CD8-positive, alpha-beta memory T cell (primary cell): ENCODE measurements at regions of chr1 and their contacts with region 1.

Region 1: DNA sequence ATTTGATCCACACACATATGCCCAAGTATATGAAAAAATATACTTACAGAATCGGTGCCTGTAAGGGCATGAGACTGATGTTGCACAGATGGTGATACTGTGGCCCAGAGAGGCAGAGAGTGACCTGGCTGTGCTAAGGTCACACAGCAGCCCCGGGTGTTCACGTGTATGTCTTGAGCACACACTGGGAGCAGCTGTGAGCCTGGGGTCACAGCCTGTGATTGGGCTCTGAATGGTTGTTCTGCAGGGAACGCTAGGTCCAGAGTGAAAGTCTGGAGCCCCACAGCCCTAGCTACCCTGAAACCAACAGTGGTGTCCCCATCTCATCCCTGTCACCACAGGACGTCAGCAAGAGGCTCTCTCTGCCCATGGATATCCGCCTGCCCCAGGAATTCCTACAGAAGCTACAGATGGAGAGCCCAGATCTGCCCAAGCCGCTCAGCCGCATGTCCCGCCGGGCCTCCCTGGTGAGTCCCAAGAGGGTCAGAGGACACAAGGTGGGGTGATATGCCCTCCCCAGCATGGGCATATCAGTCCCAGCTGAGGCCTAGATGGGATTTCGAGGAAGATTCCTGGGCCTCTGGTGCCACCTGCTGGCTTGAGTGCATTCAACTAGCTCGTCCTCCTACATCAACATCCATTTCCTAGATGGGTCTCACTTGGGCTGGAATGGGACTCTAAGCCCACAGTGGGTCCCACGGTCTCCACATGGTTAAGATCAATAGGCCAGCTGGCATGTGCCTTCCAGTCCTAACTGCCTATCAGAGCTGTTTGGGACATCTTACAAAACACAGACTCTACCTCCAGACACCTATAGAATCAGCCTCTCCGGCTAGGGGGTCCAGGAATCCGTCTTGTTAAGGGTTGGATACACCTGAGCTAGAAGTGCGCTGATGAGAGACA is 19.7 kb downstream of the CDK18 start:
- DNase-seq: peak; percentile 58 to 80 (median 62)
- H3K4me3 ChIP-seq: no peak overlapping the region
- H3K4me3 Mint-ChIP-seq: no peak overlapping the region
- H3K27ac ChIP-seq: no peak overlapping the region
- H3K27ac Mint-ChIP-seq: no peak overlapping the region
- H3K4me1 ChIP-seq: no peaks in the 10 kb centered on the region
- H3K4me1 Mint-ChIP-seq: peaks cover 0 to 2% (median 0%) of the 10 kb centered on the region in 3 donors
- H3K27me3 ChIP-seq: no peaks in the 10 kb centered on the region
- H3K27me3 Mint-ChIP-seq: peaks cover 3 to 5% of the 10 kb centered on the region in 2 donors

Region 2: DNA sequence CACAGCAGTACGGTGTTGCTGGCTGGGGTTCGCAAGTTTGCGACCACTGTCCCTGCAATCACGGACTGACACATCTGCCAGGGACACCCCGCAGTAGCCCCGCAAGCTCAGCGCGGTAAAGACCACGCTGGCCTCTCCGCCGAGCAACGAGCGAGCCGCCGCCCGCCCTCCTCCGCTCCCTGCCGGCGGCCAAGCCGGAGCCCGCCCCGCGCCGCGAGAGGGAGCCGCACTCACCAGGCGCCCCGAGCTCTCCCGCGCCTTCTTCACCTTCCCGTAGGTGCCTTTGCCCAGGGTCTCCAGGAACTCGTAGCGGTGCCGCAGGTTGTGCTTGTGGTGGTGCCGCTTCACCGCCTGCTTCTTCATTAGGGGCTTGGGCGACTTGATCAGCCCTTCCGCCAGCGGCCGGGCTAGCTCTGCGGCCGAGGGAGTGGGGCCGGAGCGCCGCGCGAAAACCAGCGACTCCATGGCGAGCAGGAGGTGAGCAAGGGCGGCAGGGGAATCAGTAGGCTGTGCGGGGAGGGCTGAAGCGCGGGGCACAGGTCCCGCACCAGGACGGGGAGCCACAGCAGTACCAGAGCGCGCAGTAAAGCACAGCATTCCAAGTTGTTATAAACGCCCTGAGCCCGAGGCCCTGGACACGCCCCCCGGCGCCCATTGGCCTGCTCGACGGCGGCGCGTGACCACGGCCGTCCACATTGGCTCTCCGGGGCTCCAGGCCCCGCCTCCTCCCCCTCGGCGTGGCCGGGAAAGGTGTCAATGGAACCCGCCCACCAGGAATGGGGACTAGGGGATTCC is 202.8 kb before region 1 on chr1 and contains the start of gene NUAK2:
- CTCF ChIA-PET with region 1: interaction called, 10 read pairs
- POLR2A ChIA-PET with region 1: no interaction called
- DNase-seq: peak; percentile 67 to 89 (median 82)
- H3K4me3 ChIP-seq: peak within 1 kb of the TSS; percentile 96
- H3K4me3 Mint-ChIP-seq: peak within 1 kb of the TSS; percentile 93 to 100 (median 96)
- H3K27ac ChIP-seq: peak within 1 kb of the TSS; percentile 48
- H3K27ac Mint-ChIP-seq: peak within 1 kb of the TSS; percentile 84 to 94 (median 89)
- H3K4me1 ChIP-seq: peaks cover 55% of the 10 kb centered on the region
- H3K4me1 Mint-ChIP-seq: peaks cover 59 to 74% (median 74%) of the 10 kb centered on the region in 3 donors
- H3K27me3 ChIP-seq: no peaks in the 10 kb centered on the region
- H3K27me3 Mint-ChIP-seq: peaks cover 0 to 4% of the 10 kb centered on the region in 2 donors
- total RNA-seq, gene NUAK2: 4.5 to 4.7 TPM

Region 3: GRCh38 chr1:205348881-205349477 is 175.2 kb before region 1 on chr1:
- CTCF ChIA-PET with region 1: interaction called, 61 read pairs
- POLR2A ChIA-PET with region 1: no interaction called
- DNase-seq: no peak
- H3K4me3 ChIP-seq: no peak overlapping the region
- H3K4me3 Mint-ChIP-seq: no peak overlapping the region
- H3K27ac ChIP-seq: no peak overlapping the region
- H3K27ac Mint-ChIP-seq: no peak overlapping the region
- H3K4me1 ChIP-seq: peaks cover 7% of the 10 kb centered on the region
- H3K4me1 Mint-ChIP-seq: peaks cover 7 to 9% (median 9%) of the 10 kb centered on the region in 3 donors
- H3K27me3 ChIP-seq: peaks cover 22% of the 10 kb centered on the region
- H3K27me3 Mint-ChIP-seq: peaks cover 32 to 49% of the 10 kb centered on the region in 2 donors

Region 4: GRCh38 chr1:205396967-205397616 is 127.0 kb before region 1 on chr1:
- CTCF ChIA-PET with region 1: interaction called, 53 read pairs
- POLR2A ChIA-PET with region 1: no interaction called
- DNase-seq: peak in 4 of 5 donors; percentile 6 to 53 (median 36)
- H3K4me3 ChIP-seq: no peak overlapping the region
- H3K4me3 Mint-ChIP-seq: no peak overlapping the region
- H3K27ac ChIP-seq: no peak overlapping the region
- H3K27ac Mint-ChIP-seq: peak overlapping the region in 1 of 8 donors; percentile 54
- H3K4me1 ChIP-seq: no peaks in the 10 kb centered on the region
- H3K4me1 Mint-ChIP-seq: peaks cover 7 to 10% (median 10%) of the 10 kb centered on the region in 3 donors
- H3K27me3 ChIP-seq: no peaks in the 10 kb centered on the region
- H3K27me3 Mint-ChIP-seq: peaks cover 8 to 21% of the 10 kb centered on the region in 2 donors

Region 5: GRCh38 chr1:205493241-205494085 is 30.7 kb before region 1 on chr1:
- CTCF ChIA-PET with region 1: interaction called, 104 read pairs
- POLR2A ChIA-PET with region 1: no interaction called
- DNase-seq: no peak
- H3K4me3 ChIP-seq: no peak overlapping the region
- H3K4me3 Mint-ChIP-seq: no peak overlapping the region
- H3K27ac ChIP-seq: no peak overlapping the region
- H3K27ac Mint-ChIP-seq: no peak overlapping the region
- H3K4me1 ChIP-seq: no peaks in the 10 kb centered on the region
- H3K4me1 Mint-ChIP-seq: no peaks in the 10 kb centered on the region
- H3K27me3 ChIP-seq: peaks cover 12% of the 10 kb centered on the region
- H3K27me3 Mint-ChIP-seq: peaks cover 14 to 43% of the 10 kb centered on the region in 2 donors

Region 6: DNA sequence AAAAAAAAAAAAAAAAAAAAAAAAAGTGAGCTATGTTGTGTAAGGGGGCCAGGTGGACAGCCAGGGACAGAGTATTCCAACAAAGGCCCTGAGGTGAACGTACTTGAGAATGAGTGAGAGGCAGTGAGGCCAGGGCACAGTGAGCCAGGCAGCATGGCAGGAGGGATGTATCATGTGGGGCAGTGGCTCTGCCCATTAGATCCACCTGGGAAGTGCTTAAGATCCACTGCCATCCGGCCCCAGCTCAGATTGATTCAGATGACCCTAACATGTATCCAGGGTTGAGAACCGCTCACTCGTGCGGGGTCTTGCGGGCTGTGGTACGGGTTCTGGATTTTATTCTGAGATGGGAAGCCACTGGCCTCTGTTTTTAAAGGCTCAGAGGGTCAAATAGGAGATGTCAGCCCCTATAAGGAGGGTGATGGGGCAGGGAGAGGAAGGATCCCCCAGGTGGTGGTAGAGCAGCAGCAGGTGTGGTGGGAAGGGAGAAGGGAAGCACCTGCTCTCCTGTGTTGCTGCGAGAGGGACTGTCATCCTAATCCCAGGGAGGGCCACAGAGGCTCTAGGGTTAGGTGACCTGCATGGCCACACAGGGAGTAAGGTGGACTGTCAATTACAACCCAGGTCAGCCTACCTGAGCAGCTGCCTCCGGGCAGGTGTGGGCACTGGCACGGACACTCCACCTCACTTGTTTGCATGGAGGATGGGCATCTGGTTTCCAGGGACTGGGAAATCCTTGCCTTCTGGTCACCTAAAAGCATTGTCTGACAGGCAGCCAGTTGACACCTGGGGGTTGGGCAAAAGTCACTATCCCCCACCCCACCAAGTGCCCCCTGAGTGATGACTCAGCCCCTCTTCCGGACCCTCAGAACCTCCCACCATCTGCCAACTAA is 12.0 kb after region 1 on chr1:
- CTCF ChIA-PET with region 1: interaction called, 20 read pairs
- POLR2A ChIA-PET with region 1: no interaction called
- DNase-seq: peak in 1 of 5 donors; percentile 22
- H3K4me3 ChIP-seq: no peak overlapping the region
- H3K4me3 Mint-ChIP-seq: peak overlapping the region in 1 of 7 donors; percentile 44
- H3K27ac ChIP-seq: no peak overlapping the region
- H3K27ac Mint-ChIP-seq: no peak overlapping the region
- H3K4me1 ChIP-seq: no peaks in the 10 kb centered on the region
- H3K4me1 Mint-ChIP-seq: peaks cover 2 to 8% (median 3%) of the 10 kb centered on the region in 3 donors
- H3K27me3 ChIP-seq: peaks cover 4% of the 10 kb centered on the region
- H3K27me3 Mint-ChIP-seq: peaks cover 15 to 26% of the 10 kb centered on the region in 2 donors

Region 7: GRCh38 chr1:205578780-205579606 is 54.9 kb after region 1 on chr1:
- CTCF ChIA-PET with region 1: no interaction called
- POLR2A ChIA-PET with region 1: no interaction called
- DNase-seq: no peak
- H3K4me3 ChIP-seq: no peak overlapping the region
- H3K4me3 Mint-ChIP-seq: no peak overlapping the region
- H3K27ac ChIP-seq: no peak overlapping the region
- H3K27ac Mint-ChIP-seq: peak overlapping the region in 1 of 8 donors; percentile 38
- H3K4me1 ChIP-seq: no peaks in the 10 kb centered on the region
- H3K4me1 Mint-ChIP-seq: peaks cover 6 to 12% (median 11%) of the 10 kb centered on the region in 3 donors
- H3K27me3 ChIP-seq: peaks cover 4% of the 10 kb centered on the region
- H3K27me3 Mint-ChIP-seq: peaks cover 4 to 35% of the 10 kb centered on the region in 2 donors

Region 8: DNA sequence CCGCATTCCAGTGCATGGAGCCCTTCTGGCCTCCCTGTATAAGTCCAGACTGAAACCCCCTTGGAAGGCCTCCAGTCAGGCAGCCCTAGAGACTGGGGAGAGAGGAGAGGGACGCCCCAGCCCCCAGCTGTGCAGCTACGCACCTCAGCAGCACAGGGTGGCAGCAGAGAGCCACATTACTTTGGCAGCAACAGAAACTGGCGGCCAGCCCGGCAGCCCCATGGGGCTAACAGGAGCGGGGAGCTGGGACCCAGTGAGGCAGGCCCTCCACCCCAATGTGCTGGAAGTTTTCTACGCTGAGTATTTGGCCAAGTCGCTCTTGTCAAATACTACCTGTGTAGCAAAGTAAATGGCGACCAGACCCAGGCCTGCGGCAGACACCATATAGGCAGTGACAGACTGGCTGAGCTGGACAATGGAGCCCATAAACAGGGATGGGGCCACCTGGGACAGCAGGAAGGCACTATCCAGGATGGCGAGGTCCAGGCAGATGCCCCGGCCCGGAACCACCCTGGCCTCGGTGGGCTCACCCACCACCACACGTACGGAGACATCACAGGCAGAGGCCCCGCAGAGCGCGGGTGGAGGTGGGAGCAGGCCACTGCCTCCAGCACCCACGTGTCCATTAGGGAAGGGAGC is 134.9 kb after region 1 on chr1:
- CTCF ChIA-PET with region 1: interaction called, 66 read pairs
- POLR2A ChIA-PET with region 1: no interaction called
- DNase-seq: peak; percentile 48 to 78 (median 59)
- H3K4me3 ChIP-seq: no peak overlapping the region
- H3K4me3 Mint-ChIP-seq: peak overlapping the region in 1 of 7 donors; percentile 8
- H3K27ac ChIP-seq: no peak overlapping the region
- H3K27ac Mint-ChIP-seq: no peak overlapping the region
- H3K4me1 ChIP-seq: no peaks in the 10 kb centered on the region
- H3K4me1 Mint-ChIP-seq: no peaks in the 10 kb centered on the region
- H3K27me3 ChIP-seq: no peaks in the 10 kb centered on the region
- H3K27me3 Mint-ChIP-seq: peaks cover 17 to 27% of the 10 kb centered on the region in 2 donors